AG04450 (cell line): ENCODE measurements at regions of chr1 and their contacts with region 1.

Region 1: GRCh38 chr1:220803401-220804201 is 16.9 kb downstream of the MTARC1 start:
- DNase-seq: no peak
- H3K4me3 ChIP-seq: no peak overlapping the region
- H3K27ac ChIP-seq: peak overlapping the region; percentile 39
- H3K27me3 ChIP-seq: peaks cover 6% of the 10 kb centered on the region
- CTCF ChIP-seq: peak; percentile 61

Region 2: DNA sequence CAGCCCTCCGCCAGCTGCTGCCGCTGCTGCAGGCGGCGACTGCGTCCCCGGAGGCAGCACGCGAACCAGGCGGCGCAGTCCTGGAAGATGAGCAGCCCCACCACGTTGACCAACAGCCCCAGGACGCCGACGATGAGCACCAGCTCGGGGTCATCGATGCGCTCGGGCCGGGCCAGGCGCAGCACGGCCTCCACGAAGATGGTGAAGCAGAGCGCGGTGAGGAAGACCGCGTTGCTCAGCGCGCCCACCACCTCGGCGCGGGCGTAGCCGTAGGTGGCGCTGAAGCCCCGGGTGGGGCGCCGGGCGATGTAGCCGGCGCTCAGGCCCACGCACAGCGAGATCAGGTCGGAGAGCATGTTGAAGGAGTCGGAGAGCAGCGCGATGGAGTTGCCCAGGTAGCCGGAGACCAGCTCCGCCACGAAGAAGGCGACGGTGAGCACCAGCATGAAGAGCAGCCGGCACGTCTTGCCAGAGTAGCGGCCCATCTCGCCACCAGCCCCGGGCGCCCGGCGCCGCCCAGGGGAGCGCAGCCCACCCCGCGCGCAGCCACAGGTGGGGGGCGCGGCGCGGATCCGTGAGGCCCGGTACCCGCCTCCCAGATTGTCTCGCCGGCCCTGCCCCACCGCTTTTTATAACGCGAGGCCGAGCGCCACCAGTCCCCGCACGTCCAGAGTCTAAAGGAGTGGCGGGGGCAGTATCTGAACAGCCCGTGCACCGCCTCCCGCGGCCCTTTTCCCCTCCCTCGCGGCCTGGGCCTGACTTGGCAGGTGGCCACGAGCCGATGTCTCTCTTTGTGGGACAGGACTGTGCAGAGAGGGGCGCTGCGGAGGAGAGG is 875.4 kb before region 1 on chr1 and contains the start of gene SLC30A10:
- CTCF ChIA-PET with region 1: no interaction called
- POLR2A ChIA-PET with region 1: no interaction called
- DNase-seq: no peak
- H3K4me3 ChIP-seq: peak within 1 kb of the TSS; percentile 46
- H3K27ac ChIP-seq: no peak within 1 kb of the TSS
- H3K27me3 ChIP-seq: peaks cover 13% of the 10 kb centered on the region
- CTCF ChIP-seq: no peak
- polyA plus RNA-seq, gene SLC30A10: not detected in 2 replicates

Region 3: DNA sequence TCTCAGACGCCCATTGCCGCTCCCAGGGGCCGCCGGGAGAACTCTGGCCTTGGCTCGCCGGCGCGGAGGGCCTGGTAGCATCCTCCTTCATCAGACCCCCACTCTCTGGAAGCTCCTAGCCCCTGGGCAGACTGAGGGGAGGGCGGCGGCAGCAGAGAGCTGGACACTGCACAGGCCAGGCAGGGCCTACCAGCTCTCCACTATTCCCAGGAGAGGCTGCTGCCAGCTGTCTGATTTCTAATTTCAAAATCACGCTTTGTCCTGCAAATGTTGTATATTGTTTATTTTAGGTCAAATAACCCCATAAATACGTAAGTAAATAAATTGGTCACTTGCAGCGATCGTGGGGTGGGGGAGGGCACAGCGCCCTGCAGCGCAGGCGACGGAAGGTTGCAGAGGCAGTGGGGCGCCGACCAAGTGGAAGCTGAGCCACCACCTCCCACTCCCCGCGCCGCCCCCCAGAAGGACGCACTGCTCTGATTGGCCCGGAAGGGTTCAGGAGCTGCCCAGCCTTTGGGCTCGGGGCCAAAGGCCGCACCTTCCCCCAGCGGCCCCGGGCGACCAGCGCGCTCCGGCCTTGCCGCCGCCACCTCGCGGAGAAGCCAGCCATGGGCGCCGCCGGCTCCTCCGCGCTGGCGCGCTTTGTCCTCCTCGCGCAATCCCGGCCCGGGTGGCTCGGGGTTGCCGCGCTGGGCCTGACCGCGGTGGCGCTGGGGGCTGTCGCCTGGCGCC is 17.1 kb before region 1 on chr1 and contains the start of gene MTARC1:
- CTCF ChIA-PET with region 1: interaction called, 16 read pairs
- POLR2A ChIA-PET with region 1: no interaction called
- DNase-seq: no peak
- H3K4me3 ChIP-seq: peak within 1 kb of the TSS; percentile 52
- H3K27ac ChIP-seq: no peak within 1 kb of the TSS
- H3K27me3 ChIP-seq: no peaks in the 10 kb centered on the region
- CTCF ChIP-seq: 0 out of 2 replicates have a peak, but pooled peaks have one; percentile 10
- polyA plus RNA-seq, gene MTARC1: 2.1 and 2.6 TPM in 2 replicates